Left cardiac atrium (tissue), 4 donors: ENCODE measurements at regions of chr19 and their contacts with region 1.

Region 1: DNA sequence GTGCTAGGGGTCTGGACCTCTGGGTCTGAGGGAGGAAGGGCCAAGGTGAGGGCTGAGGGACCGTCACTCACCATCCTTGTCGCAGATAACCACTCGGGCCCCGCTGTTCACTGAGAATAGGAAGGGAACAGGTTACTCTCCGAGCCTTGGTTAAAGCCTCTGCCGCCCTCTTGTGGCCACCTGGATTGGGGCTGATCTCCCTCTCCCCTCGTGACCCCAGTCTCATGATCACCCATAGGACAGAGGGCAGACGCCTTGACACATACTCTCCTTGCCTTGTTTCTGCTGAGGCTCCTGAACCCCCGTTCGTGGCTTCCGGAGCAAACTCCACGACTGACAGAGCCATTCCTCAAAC is 580 bp downstream of the HSD17B14 start:
- DNase-seq: peak; percentile 93
- ATAC-seq: peak; percentile 89 to 93

Region 2: DNA sequence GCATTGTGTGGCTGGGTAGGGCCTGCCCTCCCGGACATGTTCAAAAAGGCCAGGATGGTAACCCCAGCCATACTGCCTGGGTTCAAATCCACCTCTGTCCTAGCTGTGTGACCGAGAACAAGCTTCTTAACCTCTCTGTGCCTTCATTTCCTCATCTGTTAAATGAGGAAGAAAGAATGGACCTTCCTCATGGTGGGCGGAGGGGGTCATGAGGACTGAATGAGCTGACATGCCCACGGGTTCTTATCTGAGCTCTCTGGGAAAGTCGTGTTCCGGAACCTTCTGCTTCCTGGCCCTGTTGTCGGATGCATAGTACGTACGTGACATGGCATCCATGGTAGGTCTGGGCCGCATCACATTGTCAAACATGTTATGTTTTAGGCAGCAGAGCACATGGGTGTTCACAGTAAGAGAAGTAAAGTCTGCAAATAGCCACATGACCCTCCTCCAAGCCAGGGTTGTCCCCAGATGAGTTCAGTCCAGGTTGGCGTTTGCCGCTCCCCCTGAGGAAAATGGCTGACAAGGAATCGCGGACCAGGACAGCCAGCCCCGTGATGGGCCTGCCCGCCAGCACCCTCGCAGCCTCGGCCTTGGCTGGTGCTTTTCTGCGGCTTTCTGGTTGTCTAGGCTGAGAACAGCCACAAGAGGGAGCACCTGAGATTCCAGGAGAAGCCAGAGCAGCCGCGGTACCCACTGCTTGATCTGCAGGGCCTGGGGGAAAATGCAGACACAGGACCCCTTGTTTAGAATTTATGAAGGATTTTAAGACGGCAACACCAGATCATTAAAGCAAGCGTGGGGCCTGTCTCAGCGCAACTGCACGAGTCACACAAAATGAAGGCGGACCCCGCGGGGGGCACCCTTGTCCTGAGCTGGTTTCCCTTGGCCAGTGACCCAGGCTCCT is 160.5 kb before region 1 on chr19:
- intact Hi-C with region 1: loop called in 1 of 2 experiments (anchors 10 kb)
- DNase-seq: peak; percentile 86
- ATAC-seq: peak; percentile 82 to 84

Region 3: DNA sequence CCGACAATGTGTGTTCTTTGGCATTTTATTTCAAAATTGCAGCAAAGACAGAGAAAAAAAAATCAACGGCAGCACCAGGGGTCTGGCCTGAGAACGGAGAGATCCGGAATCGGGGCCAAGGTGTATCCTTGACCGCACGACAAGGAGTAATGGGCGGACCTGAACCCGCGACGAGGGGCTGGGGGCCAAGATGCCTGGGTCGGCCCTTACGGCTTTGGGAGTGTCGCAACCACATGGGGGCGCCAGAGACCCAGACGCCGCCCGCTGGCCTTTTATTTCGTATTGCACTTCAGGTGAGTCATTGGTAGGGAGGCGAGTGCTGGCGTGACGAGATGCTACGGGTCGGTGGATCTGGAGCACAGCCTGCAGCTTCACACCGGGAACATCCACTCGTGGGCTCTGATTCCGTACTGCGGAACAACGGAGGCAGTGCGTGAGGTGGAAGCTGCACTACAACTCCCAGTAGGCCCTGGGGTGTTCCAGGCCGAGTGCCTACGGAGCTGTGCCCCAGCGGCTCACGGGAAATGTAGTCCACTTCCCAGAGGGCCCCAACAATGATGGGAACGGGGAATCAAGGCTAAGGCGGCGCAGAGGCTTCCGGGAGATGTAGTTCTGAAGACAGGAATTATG is 40.5 kb before region 1 on chr19:
- intact Hi-C with region 1: loop called (anchors 1 to 2 kb)
- DNase-seq: peak; percentile 94
- ATAC-seq: peak; percentile 98 to 99

Region 4: GRCh38 chr19:48874271-48875135 is 38.8 kb after region 1 on chr19:
- intact Hi-C with region 1: no loop called
- DNase-seq: no peak
- ATAC-seq: peak in 1 of 2 donors; percentile 2